Endothelial cell of umbilical vein (primary cell): ENCODE measurements at regions of chr7 and their contacts with region 1.

Region 1: DNA sequence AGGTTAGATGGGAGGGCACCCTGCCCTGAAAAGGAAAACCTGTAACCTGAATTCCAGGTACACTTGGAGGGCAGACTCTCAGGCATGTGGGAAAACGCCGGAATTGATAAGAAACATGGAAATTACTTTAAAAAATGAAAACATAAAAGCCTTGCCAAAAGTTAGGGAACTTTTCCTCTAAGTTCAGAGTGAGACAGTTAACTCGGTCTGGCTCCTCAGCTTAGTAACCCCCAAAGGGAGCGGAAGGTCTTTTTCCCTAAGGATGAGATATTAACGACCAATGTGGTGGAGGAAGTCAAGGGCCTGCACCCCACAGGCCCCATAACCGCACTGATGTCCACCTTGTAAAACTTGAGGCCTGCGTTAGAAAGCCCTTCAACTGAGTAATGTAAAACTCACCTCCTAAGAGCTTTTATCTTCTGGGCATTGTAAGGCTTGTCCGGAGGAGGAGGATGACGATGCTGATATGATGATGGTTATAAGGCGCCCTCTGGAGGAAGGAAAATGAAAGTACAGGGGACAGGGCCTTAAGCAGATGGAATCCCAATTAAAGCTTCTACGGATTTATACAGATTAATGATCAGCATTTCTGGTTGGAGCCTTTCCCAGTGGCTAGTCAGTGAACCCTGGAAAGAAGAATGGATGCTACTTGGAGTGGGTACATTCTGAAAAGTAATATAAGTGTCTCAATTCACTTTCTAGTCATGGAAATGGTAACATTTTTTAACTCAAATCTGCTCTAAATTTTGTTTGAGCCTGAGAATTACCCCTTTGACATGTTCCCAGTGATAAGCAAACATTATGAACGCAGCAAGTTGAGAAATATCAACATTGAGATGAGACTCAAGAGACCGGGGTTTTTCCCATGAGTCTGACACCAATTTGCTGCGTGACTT is 694 bp downstream of the COL1A2 start:
- DNase-seq: peak; percentile 86
- H3K4me3 ChIP-seq: peak overlapping the region in 2 of 3 experiments; percentile 4 to 42
- H3K27ac ChIP-seq: no peak overlapping the region
- H3K4me1 ChIP-seq: peaks cover 10% of the 10 kb centered on the region
- H3K27me3 ChIP-seq: no peaks in the 10 kb centered on the region
- CTCF ChIP-seq: peak; percentile 61 to 70
- POLR2A ChIP-seq: no peak

Region 2: DNA sequence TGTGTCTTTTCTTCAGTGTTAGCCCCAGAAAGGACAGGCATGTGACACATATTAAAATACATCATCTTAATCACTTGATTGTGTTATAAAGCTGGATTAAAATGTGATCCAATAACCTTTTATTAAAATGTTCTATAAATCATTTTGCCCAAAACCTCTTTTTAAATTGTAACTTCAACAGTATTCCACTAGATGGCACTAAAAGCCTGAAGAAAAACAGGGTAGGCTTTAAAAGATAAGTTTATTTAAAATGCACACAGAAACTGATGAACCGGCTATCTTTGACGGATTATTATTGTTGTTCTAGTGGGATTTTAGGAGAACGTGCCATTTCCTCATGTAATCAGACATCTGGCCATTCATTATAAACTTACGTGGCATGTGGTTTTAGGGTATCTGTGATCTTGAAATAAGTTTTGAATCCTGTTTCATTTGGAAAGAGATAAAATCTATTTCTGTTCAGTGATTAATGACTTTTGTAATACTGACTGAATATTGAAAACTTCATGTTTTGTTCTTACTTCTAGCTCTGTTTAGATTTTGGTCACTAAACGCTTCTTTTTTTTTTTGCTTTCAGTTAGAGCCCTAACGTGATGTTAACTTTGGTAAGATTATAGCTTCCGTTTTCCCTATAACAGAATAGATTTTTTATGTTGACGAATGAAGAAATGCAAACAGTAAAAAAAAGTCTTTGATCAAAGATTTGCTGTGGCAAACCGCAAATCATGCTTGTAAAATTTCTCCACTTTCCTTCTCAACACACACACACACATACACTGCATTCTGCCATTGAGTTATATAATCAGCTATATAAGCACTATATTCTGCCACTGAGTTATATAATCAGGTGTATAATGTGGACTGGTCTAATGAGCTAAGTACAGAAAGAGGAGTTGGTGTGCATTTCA is 1149.6 kb before region 1 on chr7:
- CTCF ChIA-PET with region 1: no interaction called
- POLR2A ChIA-PET with region 1: no interaction called
- dilution Hi-C with region 1: no loop called
- intact Hi-C with region 1: loop called (anchors 10 kb)
- DNase-seq: peak; percentile 59
- H3K4me3 ChIP-seq: no peak overlapping the region
- H3K27ac ChIP-seq: no peak overlapping the region
- H3K4me1 ChIP-seq: no peaks in the 10 kb centered on the region
- H3K27me3 ChIP-seq: no peaks in the 10 kb centered on the region
- CTCF ChIP-seq: peak; percentile 19 to 31
- POLR2A ChIP-seq: no peak

Region 3: GRCh38 chr7:93530701-93531100 is 864.7 kb before region 1 on chr7:
- CTCF ChIA-PET with region 1: no interaction called
- POLR2A ChIA-PET with region 1: no interaction called
- dilution Hi-C with region 1: no loop called
- intact Hi-C with region 1: no loop called
- DNase-seq: no peak
- H3K4me3 ChIP-seq: no peak overlapping the region
- H3K27ac ChIP-seq: no peak overlapping the region
- H3K4me1 ChIP-seq: no peaks in the 10 kb centered on the region
- H3K27me3 ChIP-seq: no peaks in the 10 kb centered on the region
- CTCF ChIP-seq: no peak
- POLR2A ChIP-seq: no peak

Region 4: DNA sequence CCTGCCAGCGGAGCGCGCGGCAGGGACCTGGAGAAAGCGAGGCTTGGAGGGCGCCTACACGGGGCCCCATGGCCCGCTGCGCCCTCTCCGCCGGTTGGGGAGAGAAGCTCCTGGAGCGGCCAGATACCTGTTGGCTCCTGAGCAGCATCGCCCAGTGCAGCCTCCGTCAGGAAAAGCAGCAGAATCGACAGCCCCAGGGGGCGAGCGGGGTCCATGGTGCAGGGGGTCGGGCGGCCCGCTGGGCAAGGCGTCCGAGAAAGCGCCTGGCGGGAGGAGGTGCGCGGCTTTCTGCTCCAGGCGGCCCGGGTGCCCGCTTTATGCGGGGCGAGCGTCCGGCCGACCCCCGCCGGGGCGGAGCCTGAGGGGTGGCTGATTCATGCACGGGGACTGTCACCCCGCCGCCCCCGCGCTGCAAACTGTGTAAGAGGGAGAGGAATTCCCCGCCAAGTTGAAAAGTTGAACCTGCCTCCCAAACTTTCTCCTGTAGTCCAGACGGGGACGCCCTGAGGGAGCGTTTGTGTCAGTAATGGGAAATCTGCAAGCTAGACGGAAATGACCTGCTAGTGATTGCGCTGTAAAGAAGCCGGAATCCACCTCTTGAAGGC is 504.8 kb before region 1 on chr7 and contains the start of gene TFPI2:
- CTCF ChIA-PET with region 1: no interaction called
- POLR2A ChIA-PET with region 1: no interaction called
- dilution Hi-C with region 1: no loop called
- intact Hi-C with region 1: loop called (anchors 5 kb)
- DNase-seq: peak; percentile 62
- H3K4me3 ChIP-seq: peak within 1 kb of the TSS; percentile 63 to 97 (median 82)
- H3K27ac ChIP-seq: no peak within 1 kb of the TSS
- H3K4me1 ChIP-seq: peaks cover 23% of the 10 kb centered on the region
- H3K27me3 ChIP-seq: peaks cover 0 to 3% of the 10 kb centered on the region in 2 experiments
- CTCF ChIP-seq: no peak
- POLR2A ChIP-seq: no peak
- total RNA-seq, gene TFPI2: 33.1 and 65.9 TPM in 2 replicates

Region 5: DNA sequence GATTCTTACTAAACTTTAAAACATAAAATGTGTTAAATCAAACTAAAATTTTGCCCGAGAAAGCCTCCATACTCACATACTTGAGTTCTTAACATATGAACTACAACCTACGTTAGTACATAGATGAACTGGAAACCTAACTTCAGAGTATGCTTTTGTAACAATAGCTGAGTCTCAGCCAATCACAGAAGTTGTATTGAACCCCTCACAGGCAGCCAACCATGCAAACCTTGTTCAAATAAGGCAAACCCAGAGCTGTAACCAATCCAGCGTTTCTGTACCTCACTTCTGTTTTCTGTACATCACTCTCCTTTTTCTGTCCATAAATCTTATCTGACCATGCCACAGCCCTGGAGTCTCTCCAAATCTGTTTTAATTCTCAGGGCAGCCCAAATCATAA is 158.0 kb before region 1 on chr7:
- CTCF ChIA-PET with region 1: no interaction called
- POLR2A ChIA-PET with region 1: no interaction called
- dilution Hi-C with region 1: no loop called
- intact Hi-C with region 1: no loop called
- DNase-seq: peak; percentile 21
- H3K4me3 ChIP-seq: no peak overlapping the region
- H3K27ac ChIP-seq: no peak overlapping the region
- H3K4me1 ChIP-seq: no peaks in the 10 kb centered on the region
- H3K27me3 ChIP-seq: no peaks in the 10 kb centered on the region
- CTCF ChIP-seq: no peak
- POLR2A ChIP-seq: no peak

Region 6: DNA sequence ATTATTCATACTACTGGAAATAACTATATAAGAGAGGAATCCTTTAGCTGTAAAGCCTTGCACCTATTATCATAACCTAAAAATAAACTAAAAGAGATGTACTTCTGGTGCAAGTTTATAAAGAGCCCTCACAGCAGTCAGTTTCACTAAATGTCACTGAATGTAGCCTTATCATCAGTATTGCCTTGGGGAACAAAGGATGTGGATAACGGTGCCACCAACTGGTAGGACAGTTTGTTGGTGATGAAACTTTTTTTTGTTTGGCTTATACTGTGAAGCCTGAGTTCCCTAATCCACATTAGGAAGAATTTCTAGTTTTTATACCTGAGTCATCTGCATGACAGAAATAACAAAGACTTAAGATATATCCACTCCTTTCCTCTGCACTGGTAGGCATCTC is 118.6 kb before region 1 on chr7:
- CTCF ChIA-PET with region 1: interaction called, 11 read pairs
- POLR2A ChIA-PET with region 1: no interaction called
- dilution Hi-C with region 1: no loop called
- intact Hi-C with region 1: no loop called
- DNase-seq: peak; percentile 57
- H3K4me3 ChIP-seq: no peak overlapping the region
- H3K27ac ChIP-seq: no peak overlapping the region
- H3K4me1 ChIP-seq: no peaks in the 10 kb centered on the region
- H3K27me3 ChIP-seq: no peaks in the 10 kb centered on the region
- CTCF ChIP-seq: peak; percentile 25 to 29
- POLR2A ChIP-seq: no peak

Region 7: DNA sequence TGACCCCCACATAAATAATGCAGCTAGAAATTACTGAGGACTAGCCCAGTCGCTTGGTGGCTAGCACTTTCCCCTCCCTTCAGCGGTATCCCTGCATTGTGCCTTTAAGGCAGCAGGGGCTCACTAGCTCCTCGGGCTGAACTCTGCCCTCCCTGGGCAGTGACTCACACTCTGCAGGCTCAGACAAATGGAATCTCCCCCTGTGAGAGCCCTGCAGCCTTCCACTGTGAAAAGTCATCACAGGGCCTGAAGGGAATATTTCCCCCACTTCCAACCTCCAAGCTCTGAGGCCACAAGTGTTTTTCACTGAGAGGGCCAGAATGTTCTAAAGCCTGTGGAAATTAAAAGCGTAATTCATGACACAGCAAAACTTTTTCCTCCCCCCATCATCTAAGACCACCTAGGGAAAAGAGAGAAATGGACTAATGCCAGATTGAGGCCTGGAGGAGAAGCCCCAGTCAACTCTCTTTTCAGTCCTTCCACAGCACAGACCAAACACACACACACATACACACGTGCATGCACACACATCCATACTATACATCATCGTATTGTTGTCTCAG is 94.3 kb before region 1 on chr7:
- CTCF ChIA-PET with region 1: interaction called, 868 read pairs
- POLR2A ChIA-PET with region 1: interaction called, 5 read pairs
- dilution Hi-C with region 1: no loop called
- intact Hi-C with region 1: loop called (anchors 1 kb)
- DNase-seq: peak; percentile 93
- H3K4me3 ChIP-seq: no peak overlapping the region
- H3K27ac ChIP-seq: peak overlapping the region; percentile 72
- H3K4me1 ChIP-seq: peaks cover 24% of the 10 kb centered on the region
- H3K27me3 ChIP-seq: no peaks in the 10 kb centered on the region
- CTCF ChIP-seq: no peak
- POLR2A ChIP-seq: no peak

Region 8: DNA sequence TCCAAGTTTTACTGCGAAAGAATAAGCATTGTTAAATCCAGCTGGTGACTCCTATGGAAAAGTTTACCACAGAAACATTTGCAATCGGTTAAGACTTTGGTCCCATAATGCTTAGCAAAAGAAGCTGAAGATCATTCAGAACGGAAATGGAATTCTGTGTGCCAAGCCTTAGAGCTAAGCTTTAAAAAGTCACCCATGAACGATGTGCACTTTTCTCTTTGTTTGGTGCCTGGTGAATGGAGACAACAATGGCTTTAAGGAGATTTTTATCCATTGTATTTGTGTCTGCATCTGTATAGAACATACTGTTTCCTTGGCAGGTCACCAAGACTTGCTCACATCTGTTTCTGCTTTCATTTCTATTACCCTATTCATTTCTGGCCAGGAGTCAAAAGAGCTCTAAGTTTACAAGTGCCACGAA is 27.0 kb before region 1 on chr7:
- CTCF ChIA-PET with region 1: interaction called, 40 read pairs
- POLR2A ChIA-PET with region 1: no interaction called
- dilution Hi-C with region 1: no loop called
- intact Hi-C with region 1: no loop called
- DNase-seq: peak; percentile 97
- H3K4me3 ChIP-seq: peak overlapping the region in 1 of 3 experiments; percentile 30
- H3K27ac ChIP-seq: peak overlapping the region; percentile 88
- H3K4me1 ChIP-seq: peaks cover 15% of the 10 kb centered on the region
- H3K27me3 ChIP-seq: no peaks in the 10 kb centered on the region
- CTCF ChIP-seq: no peak
- POLR2A ChIP-seq: no peak

Region 9: DNA sequence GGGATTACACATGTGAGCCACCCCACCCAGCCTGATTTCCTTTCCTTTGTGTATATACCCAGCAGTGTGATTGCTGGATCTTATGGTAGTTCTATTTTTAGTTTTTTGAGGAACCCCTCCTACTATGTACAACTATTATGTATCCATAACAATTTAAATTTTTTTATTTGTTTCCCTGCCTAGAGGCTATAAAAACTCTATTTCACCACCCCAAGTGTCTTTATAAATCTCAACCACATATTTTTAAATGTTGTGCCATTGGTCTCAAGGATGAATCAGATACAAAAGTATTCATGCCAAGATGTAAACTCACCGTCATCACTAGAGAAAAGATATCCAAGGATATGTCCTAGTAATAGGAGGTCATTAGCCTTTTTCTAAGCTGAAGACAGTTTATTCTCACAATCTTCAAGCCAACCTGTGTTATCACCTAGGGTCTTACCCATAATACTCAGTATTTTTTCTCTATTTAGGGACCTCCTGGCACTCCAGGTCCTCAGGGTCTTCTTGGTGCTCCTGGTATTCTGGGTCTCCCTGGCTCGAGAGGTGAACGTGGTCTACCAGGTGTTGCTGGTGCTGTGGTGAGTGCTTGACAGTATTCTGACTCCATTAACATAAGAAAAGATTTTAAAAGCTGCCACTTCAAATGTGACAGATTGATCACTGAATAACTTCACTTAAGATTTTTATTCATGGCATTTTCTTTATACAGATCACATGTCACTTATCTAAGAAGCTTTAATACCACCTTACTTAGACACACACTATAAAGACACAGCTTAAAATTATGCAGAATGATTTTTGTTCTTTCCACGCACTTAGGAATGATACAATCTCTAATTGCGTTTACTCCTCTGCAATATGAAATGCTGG is 28.7 kb after region 1 on chr7:
- CTCF ChIA-PET with region 1: interaction called, 11 read pairs
- POLR2A ChIA-PET with region 1: no interaction called
- dilution Hi-C with region 1: no loop called
- intact Hi-C with region 1: no loop called
- DNase-seq: no peak
- H3K4me3 ChIP-seq: no peak overlapping the region
- H3K27ac ChIP-seq: no peak overlapping the region
- H3K4me1 ChIP-seq: no peaks in the 10 kb centered on the region
- H3K27me3 ChIP-seq: no peaks in the 10 kb centered on the region
- CTCF ChIP-seq: no peak
- POLR2A ChIP-seq: no peak

Region 10: DNA sequence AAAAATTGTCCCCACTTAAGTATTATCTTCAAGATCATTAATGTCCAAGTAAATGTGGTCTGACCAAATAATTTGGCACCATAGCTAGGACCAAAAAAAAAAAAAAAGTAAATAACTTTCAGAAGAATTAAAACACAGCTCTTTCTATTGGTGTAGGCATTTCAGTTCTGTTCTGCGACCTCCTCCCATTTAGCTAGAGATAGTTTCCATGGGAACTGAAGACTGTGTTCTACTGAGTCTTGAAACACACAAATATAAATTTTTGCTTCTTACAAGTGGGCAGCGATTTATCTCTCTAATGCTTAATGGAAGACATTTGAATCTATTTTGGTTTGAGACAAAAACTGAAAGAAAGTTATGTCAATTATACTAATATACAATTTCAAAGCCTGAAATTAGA is 383.7 kb after region 1 on chr7:
- CTCF ChIA-PET with region 1: no interaction called
- POLR2A ChIA-PET with region 1: no interaction called
- dilution Hi-C with region 1: no loop called
- intact Hi-C with region 1: no loop called
- DNase-seq: no peak
- H3K4me3 ChIP-seq: no peak overlapping the region
- H3K27ac ChIP-seq: no peak overlapping the region
- H3K4me1 ChIP-seq: no peaks in the 10 kb centered on the region
- H3K27me3 ChIP-seq: no peaks in the 10 kb centered on the region
- CTCF ChIP-seq: no peak
- POLR2A ChIP-seq: no peak